GM18951 (cell line): ENCODE measurements at regions of chr3 and their contacts with region 1.

Region 1: DNA sequence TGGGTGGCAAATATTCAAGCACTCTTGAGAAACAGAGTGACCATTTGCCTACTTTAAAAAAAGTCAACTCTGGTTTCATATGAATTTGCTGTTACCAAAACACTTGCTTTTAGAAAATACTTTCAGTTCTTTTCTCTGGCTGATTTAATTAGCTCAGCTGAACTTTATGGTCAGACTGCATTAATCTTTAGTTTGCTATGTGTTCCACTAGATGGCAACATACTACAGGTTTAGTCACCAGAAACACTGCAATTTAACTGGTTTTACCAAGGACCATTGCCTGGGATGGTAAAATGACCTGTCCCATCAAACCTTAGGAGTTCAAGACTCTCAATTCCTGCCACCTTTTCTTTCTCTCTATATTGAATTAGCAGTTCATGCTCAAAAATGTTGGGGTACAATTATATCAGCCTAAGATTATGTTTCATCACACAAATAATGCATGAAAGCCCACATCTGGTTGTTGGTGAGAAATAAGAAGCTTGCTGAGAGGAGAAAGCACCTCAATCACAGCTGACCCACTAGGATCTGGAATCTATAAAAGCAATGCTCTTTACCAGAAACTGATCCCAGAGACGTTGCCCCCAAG is 14.2 kb downstream of the EIF4E3 start:
- POLR2A ChIP-seq: no peak

Region 2: DNA sequence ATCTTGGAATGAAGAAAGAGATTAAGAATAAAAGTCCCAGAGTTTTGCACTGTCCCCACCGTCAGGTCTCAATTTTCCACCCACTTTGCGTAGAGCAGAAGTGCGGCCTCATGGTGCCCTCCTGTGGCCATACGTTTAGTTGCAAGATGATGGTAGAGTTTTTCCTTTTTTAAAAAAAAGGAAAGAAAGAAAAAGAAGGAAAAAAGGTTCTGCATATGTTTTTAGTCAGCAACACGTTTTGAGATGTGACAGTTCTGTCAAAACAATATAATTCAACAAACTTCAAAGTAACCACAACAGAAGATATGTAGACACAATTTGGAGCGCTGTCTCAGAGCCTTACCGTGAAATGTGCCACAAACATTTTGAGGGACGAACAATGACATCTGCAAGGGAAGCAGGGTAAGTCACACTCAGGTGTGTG is 1375.1 kb after region 1 on chr3:
- in situ Hi-C with region 1: loop called (anchors 25 kb)
- POLR2A ChIP-seq: no peak